ENCODE measurements at regions of chr7 and their contacts with region 1.

Region 1: DNA sequence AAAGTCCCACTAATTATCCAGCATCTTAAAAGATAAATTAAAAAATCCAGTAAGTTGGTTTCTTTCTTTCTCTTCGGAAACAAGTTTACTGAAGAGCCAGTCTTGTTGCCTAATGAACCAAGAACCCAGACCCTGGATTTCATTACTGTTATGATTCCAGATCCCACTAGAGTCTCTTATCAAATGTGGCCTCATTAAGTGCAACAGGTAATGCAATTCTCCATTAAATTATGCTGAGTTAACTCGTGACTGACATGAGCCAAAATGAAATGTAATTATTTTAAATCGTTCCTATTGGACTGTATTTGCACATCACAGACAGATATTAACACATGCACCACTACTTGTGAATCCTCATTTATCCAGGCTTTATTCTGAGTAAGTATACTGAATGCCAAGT is 115.6 kb downstream of the NXPH1 start:
- DNase-seq: no peak
- H3K4me3 ChIP-seq: no peak overlapping the region
- H3K27ac ChIP-seq: no peak overlapping the region
- H3K4me1 ChIP-seq: no peaks in the 10 kb centered on the region
- H3K27me3 ChIP-seq: no peaks in the 10 kb centered on the region
- CTCF ChIP-seq: no peak
- POLR2A ChIP-seq: no peak

Region 2: GRCh38 chr7:9017286-9017685 is 468.2 kb after region 1 on chr7:
- intact Hi-C with region 1: loop called (anchors 5 kb)
- DNase-seq: no peak
- H3K4me3 ChIP-seq: no peak overlapping the region
- H3K27ac ChIP-seq: no peak overlapping the region
- H3K4me1 ChIP-seq: no peaks in the 10 kb centered on the region
- H3K27me3 ChIP-seq: no peaks in the 10 kb centered on the region
- CTCF ChIP-seq: no peak
- POLR2A ChIP-seq: no peak